ENCODE measurements at regions of chr1 and their contacts with region 1.

Region 1: GRCh38 chr1:117067533-117068370 is 7.6 kb downstream of the TTF2 start:
- DNase-seq: peak; percentile 50
- CTCF ChIP-seq: peak; percentile 68

Region 2: DNA sequence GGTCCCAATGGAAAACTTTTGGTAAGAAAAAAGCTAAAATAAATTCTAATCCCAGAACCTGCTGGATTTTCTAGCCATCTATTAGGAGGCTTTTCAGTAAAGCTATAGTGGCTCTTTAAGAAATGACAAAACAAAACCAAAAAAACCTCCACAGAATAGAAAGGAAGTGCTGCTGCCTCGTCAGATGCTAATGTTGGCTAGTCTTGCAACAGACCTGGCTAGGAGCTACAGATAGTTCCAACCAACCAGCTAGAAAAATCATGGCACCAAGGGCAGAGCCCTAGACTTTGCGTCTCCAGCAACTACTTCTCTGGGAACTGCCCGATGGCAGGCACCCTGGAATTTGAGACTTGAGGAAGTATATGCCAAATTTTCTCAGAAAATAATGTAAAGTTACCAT is 58.6 kb before region 1 on chr1:
- CTCF ChIA-PET with region 1: no interaction called
- POLR2A ChIA-PET with region 1: no interaction called
- DNase-seq: no peak
- CTCF ChIP-seq: no peak

Region 3: GRCh38 chr1:117093870-117094621 is 26.3 kb after region 1 on chr1:
- CTCF ChIA-PET with region 1: interaction called, 17 read pairs
- POLR2A ChIA-PET with region 1: no interaction called
- DNase-seq: peak; percentile 17
- CTCF ChIP-seq: no peak

Region 4: GRCh38 chr1:117121776-117122697 is 54.3 kb after region 1 on chr1:
- CTCF ChIA-PET with region 1: interaction called, 97 read pairs
- POLR2A ChIA-PET with region 1: no interaction called
- DNase-seq: peak; percentile 92
- CTCF ChIP-seq: peak; percentile 58

Region 5: DNA sequence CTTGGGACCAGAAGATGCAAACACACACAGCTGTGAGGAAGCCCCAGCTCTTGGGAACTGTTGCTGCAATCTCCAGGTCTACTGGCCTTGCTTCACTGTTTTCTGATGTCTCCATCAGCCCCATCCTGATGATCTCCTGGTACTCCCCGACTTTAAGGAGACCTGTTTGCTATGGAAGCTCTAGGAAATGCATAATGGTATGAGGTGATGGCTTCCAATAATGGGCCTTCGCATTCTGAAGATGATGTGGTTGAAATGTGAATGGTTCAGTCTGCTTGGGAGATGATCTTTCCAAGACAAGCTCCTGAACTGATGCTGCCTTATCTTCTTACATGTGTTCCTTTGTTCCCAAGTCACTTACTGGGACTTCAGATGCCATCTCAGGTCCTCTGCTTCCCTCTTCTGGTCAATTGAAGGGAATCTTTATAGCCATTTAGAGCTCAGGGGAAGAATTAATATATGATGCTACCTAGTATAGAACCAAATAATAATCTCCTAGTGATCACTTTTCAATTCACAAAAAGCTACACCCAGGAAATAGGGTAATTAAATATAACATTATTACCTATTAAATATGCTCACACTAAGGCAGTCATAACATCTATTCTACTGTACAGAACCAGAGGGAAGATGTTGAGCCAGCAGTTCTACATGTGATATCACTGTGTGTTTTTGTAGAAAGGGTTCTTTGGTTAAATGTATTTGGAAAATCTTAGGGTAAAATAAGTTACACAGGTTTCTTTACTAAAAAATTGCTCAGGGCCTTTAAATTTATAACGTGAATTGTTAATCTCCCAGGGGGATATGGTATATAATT is 216.9 kb after region 1 on chr1:
- CTCF ChIA-PET with region 1: interaction called, 21 read pairs
- POLR2A ChIA-PET with region 1: no interaction called
- DNase-seq: no peak
- CTCF ChIP-seq: peak; percentile 41